Activated CD8-positive, alpha-beta T cell treated with anti-CD3 and anti-CD28 coated beads for 36 hours (primary cell): ENCODE measurements at regions of chr5 and their contacts with region 1.

Region 1: DNA sequence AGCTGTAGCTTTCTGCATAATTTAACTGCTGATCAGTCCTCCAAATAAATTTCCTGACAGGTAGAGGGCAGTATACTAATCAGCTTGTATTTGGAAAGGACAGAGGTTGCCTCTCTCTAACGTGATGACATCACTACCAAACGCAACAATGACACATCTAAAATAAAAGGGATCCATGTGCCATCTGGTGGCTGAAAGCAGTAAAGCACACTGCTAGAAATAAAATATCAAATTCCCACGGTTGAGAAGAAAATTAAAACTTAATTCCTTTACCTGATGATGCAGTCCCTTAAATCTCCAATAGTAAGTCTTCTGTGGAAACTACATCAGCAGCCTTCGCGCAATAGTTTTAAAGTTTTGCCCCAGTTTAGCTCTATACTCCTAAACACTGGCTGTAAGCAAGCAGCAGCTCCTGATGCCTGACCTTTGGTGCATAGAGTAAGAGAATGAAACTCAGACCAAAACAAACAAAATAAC is 54.5 kb downstream of the DIAPH1 start:
- DNase-seq: peak; percentile 82
- ATAC-seq: peak; percentile 96
- H3K4me3 Mint-ChIP-seq: no peak overlapping the region
- H3K27ac Mint-ChIP-seq: peak overlapping the region; percentile 89
- H3K4me1 Mint-ChIP-seq: peaks cover 26% of the 10 kb centered on the region
- H3K27me3 Mint-ChIP-seq: no peaks in the 10 kb centered on the region
- CTCF ChIP-seq: peak; percentile 95

Region 2: GRCh38 chr5:141320225-141321169 is 243.8 kb before region 1 on chr5 and contains the start of gene TAF7:
- CTCF ChIA-PET with region 1: interaction called, 17 read pairs
- POLR2A ChIA-PET with region 1: no interaction called
- intact Hi-C with region 1: loop called (anchors 10 kb)
- DNase-seq: peak; percentile 93
- ATAC-seq: peak; percentile 93
- H3K4me3 Mint-ChIP-seq: peak within 1 kb of the TSS; percentile 95
- H3K27ac Mint-ChIP-seq: peak within 1 kb of the TSS; percentile 98
- H3K4me1 Mint-ChIP-seq: peaks cover 25% of the 10 kb centered on the region
- H3K27me3 Mint-ChIP-seq: no peaks in the 10 kb centered on the region
- CTCF ChIP-seq: peak; percentile 89
- total RNA-seq, gene TAF7: 56.2 to 58.1 TPM

Region 3: GRCh38 chr5:141402553-141403260 is 161.5 kb before region 1 on chr5 and contains the start of gene PCDHGA9:
- CTCF ChIA-PET with region 1: interaction called, 14 read pairs
- POLR2A ChIA-PET with region 1: no interaction called
- intact Hi-C with region 1: no loop called
- DNase-seq: peak; percentile 42
- ATAC-seq: peak; percentile 42
- H3K4me3 Mint-ChIP-seq: no peak within 1 kb of the TSS
- H3K27ac Mint-ChIP-seq: no peak within 1 kb of the TSS
- H3K4me1 Mint-ChIP-seq: no peaks in the 10 kb centered on the region
- H3K27me3 Mint-ChIP-seq: peaks cover 62% of the 10 kb centered on the region
- CTCF ChIP-seq: peak; percentile 47
- total RNA-seq, gene PCDHGA9: 0.09 TPM in 1 of 2 experiments, not detected in the other

Region 4: DNA sequence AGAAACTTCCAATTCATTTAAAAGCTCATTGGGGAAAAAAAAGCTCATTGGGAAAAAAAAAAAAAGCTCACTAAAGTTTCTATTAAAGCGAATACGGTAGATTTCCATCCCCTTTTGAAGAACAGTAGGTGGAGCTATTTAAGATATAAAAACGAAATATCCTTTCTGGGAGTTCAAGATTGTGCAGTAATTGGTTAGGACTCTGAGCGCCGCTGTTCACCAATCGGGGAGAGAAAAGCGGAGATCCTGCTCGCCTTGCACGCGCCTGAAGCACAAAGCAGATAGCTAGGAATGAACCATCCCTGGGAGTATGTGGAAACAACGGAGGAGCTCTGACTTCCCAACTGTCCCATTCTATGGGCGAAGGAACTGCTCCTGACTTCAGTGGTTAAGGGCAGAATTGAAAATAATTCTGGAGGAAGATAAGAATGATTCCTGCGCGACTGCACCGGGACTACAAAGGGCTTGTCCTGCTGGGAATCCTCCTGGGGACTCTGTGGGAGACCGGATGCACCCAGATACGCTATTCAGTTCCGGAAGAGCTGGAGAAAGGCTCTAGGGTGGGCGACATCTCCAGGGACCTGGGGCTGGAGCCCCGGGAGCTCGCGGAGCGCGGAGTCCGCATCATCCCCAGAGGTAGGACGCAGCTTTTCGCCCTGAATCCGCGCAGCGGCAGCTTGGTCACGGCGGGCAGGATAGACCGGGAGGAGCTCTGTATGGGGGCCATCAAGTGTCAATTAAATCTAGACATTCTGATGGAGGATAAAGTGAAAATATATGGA is 133.7 kb before region 1 on chr5 and contains the start of gene PCDHGA12:
- CTCF ChIA-PET with region 1: interaction called, 24 read pairs
- POLR2A ChIA-PET with region 1: no interaction called
- intact Hi-C with region 1: no loop called
- DNase-seq: peak; percentile 63
- ATAC-seq: peak; percentile 83
- H3K4me3 Mint-ChIP-seq: peak within 1 kb of the TSS; percentile 35
- H3K27ac Mint-ChIP-seq: no peak within 1 kb of the TSS
- H3K4me1 Mint-ChIP-seq: peaks cover 5% of the 10 kb centered on the region
- H3K27me3 Mint-ChIP-seq: peaks cover 58% of the 10 kb centered on the region
- CTCF ChIP-seq: peak; percentile 36
- total RNA-seq, gene PCDHGA12: not detected

Region 5: DNA sequence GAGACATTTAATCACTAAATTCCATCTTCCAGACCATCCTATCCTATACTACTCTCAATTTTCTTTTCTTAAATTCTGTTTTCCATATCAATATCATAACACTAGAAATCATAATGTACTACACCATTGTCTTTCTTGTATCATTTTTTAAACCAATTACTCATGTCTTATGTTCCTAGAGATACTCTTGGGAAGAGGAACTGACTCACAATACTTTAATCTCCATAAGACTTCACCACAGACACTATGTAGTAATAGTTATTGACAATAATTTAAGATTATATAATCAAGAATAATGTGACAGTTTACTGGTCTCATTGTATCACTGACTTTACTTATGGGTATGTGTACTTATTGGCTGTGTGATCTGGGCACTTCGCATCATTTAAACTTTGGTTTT is 31.5 kb before region 1 on chr5:
- CTCF ChIA-PET with region 1: interaction called, 15 read pairs
- POLR2A ChIA-PET with region 1: no interaction called
- intact Hi-C with region 1: no loop called
- DNase-seq: no peak
- ATAC-seq: no peak
- H3K4me3 Mint-ChIP-seq: no peak overlapping the region
- H3K27ac Mint-ChIP-seq: no peak overlapping the region
- H3K4me1 Mint-ChIP-seq: peaks cover 2% of the 10 kb centered on the region
- H3K27me3 Mint-ChIP-seq: no peaks in the 10 kb centered on the region
- CTCF ChIP-seq: no peak

Region 6: GRCh38 chr5:141598391-141599350 is 34.4 kb after region 1 on chr5:
- CTCF ChIA-PET with region 1: interaction called, 24 read pairs
- POLR2A ChIA-PET with region 1: no interaction called
- intact Hi-C with region 1: no loop called
- DNase-seq: no peak
- ATAC-seq: peak; percentile 88
- H3K4me3 Mint-ChIP-seq: no peak overlapping the region
- H3K27ac Mint-ChIP-seq: peak overlapping the region; percentile 71
- H3K4me1 Mint-ChIP-seq: peaks cover 72% of the 10 kb centered on the region
- H3K27me3 Mint-ChIP-seq: no peaks in the 10 kb centered on the region
- CTCF ChIP-seq: no peak

Region 7: GRCh38 chr5:141681695-141682641 is 117.7 kb after region 1 on chr5 and contains the start of gene ARAP3:
- CTCF ChIA-PET with region 1: no interaction called
- POLR2A ChIA-PET with region 1: no interaction called
- intact Hi-C with region 1: no loop called
- DNase-seq: peak; percentile 54
- ATAC-seq: peak; percentile 73
- H3K4me3 Mint-ChIP-seq: peak within 1 kb of the TSS; percentile 72
- H3K27ac Mint-ChIP-seq: peak within 1 kb of the TSS; percentile 68
- H3K4me1 Mint-ChIP-seq: peaks cover 24% of the 10 kb centered on the region
- H3K27me3 Mint-ChIP-seq: no peaks in the 10 kb centered on the region
- CTCF ChIP-seq: no peak
- total RNA-seq, gene ARAP3: 5.9 to 7.2 TPM

Region 8: DNA sequence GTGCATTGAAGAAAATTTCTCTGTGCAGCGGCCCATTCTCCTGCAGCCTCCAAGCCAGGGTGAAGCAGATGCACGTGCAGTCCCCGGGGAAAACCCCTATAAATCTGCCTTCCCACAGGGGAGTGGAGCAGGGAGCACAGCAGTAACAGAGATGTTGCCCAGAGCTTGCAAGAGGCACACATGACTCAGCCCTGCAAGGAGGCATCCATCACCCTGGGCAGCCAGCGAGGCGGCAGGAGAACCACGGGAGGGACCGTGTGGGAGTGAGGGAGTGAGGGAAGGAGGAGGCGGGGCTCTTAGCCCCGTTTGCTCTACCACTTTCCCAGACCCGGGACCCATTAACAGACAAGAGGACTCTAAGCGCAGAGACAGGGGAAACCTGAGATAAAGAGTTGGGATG is 214.0 kb after region 1 on chr5:
- CTCF ChIA-PET with region 1: no interaction called
- POLR2A ChIA-PET with region 1: no interaction called
- intact Hi-C with region 1: no loop called
- DNase-seq: peak; percentile 11
- ATAC-seq: peak; percentile 56
- H3K4me3 Mint-ChIP-seq: no peak overlapping the region
- H3K27ac Mint-ChIP-seq: no peak overlapping the region
- H3K4me1 Mint-ChIP-seq: peaks cover 10% of the 10 kb centered on the region
- H3K27me3 Mint-ChIP-seq: peaks cover 5% of the 10 kb centered on the region
- CTCF ChIP-seq: no peak